Panc1 (cell line): ENCODE measurements at regions of chr6 and their contacts with region 1.

Region 1: GRCh38 chr6:127266178-127266891 is at the start of gene RNF146:
- DNase-seq: peak; percentile 74
- ATAC-seq: peak; percentile 93
- H3K4me3 ChIP-seq: peak within 1 kb of the TSS; percentile 77 to 97
- H3K27ac ChIP-seq: peak within 1 kb of the TSS; percentile 92
- H3K4me1 ChIP-seq: peaks cover 19% of the 10 kb centered on the region
- H3K27me3 ChIP-seq: peaks cover 16% of the 10 kb centered on the region
- CTCF ChIP-seq: peak; percentile 94
- total RNA-seq, gene RNF146: 43.1 TPM

Region 2: GRCh38 chr6:126764104-126764503 is 502.2 kb before region 1 on chr6:
- CTCF ChIA-PET with region 1: no interaction called
- POLR2A ChIA-PET with region 1: no interaction called
- in situ Hi-C with region 1: no loop called
- intact Hi-C with region 1: no loop called
- DNase-seq: no peak
- ATAC-seq: no peak
- H3K4me3 ChIP-seq: no peak overlapping the region
- H3K27ac ChIP-seq: no peak overlapping the region
- H3K4me1 ChIP-seq: no peaks in the 10 kb centered on the region
- H3K27me3 ChIP-seq: no peaks in the 10 kb centered on the region
- CTCF ChIP-seq: no peak

Region 3: DNA sequence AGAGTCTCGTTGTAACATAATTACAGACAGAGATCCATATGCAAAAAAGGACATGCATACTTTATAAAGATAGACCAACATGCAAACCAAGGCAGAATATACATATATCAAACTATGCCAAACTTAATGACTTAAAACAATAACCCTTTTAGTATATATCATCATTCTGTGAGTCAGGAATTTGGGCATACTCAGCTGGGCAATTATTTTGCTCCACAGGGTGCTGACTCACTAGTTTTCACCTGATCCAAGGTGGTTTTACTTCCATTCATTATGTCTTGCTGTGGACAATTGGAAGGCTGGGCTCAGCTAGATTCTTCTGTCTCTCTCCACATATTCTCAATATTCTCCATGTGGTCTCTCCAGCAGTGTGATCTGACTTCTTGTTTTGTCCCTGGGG is 40.8 kb before region 1 on chr6:
- CTCF ChIA-PET with region 1: no interaction called
- POLR2A ChIA-PET with region 1: no interaction called
- in situ Hi-C with region 1: no loop called
- intact Hi-C with region 1: no loop called
- DNase-seq: no peak
- ATAC-seq: no peak
- H3K4me3 ChIP-seq: no peak overlapping the region
- H3K27ac ChIP-seq: no peak overlapping the region
- H3K4me1 ChIP-seq: no peaks in the 10 kb centered on the region
- H3K27me3 ChIP-seq: peaks cover 3% of the 10 kb centered on the region
- CTCF ChIP-seq: no peak

Region 4: DNA sequence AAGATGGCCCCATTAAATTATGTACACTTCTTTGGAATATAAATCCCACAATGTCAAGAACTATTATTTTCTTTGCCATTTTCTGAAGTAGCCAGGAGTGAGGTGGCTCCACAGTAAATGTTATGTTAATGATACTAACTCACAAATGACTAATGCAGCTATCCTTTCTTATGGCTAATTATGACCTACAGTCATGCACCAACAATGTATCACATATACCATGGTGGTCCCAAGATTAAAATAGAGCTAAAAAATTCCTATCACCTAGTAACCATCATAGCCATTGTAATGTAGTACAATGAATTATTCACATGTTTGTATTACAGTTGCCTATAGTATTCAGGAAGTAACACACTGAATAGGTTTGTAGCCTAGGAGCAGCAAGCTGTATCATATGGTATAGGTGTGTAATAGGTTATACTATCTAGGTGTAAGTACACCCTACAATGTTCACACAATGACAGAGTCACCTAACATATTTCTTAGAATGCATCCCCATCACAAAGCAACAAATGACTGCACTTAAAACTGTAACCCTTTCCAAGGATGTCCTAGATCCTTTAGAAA is 61.8 kb after region 1 on chr6:
- CTCF ChIA-PET with region 1: no interaction called
- POLR2A ChIA-PET with region 1: interaction called, 14 read pairs
- in situ Hi-C with region 1: no loop called
- intact Hi-C with region 1: no loop called
- DNase-seq: no peak
- ATAC-seq: peak; percentile 57; the same call in 1 of the 2 replicates
- H3K4me3 ChIP-seq: no peak overlapping the region
- H3K27ac ChIP-seq: no peak overlapping the region
- H3K4me1 ChIP-seq: peaks cover 8% of the 10 kb centered on the region; the same call in 1 of the 2 replicates
- H3K27me3 ChIP-seq: no peaks in the 10 kb centered on the region
- CTCF ChIP-seq: no peak

Region 5: DNA sequence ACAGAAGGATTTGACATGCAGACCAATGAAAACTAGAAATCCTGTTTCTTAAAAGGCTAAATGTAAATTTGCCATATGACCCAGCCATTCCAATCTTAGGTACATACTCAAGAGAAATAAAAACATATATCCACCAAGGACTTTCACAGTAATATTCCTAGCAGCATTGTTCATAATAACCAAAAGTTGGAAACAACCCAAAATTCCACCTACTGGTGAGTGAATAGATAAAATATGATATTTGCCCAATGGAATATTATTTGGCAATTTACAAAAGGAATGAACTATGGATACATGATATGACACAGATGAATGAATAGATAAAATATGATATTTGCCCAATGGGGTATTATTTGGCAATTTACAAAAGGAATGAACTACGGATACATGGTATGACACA is 230.1 kb after region 1 on chr6:
- CTCF ChIA-PET with region 1: no interaction called
- POLR2A ChIA-PET with region 1: no interaction called
- in situ Hi-C with region 1: no loop called
- intact Hi-C with region 1: no loop called
- DNase-seq: no peak
- ATAC-seq: no peak
- H3K4me3 ChIP-seq: no peak overlapping the region
- H3K27ac ChIP-seq: no peak overlapping the region
- H3K4me1 ChIP-seq: no peaks in the 10 kb centered on the region
- H3K27me3 ChIP-seq: no peaks in the 10 kb centered on the region
- CTCF ChIP-seq: no peak